ENCODE measurements at regions of chr5 and their contacts with region 1.

Region 1: GRCh38 chr5:149960272-149961185 is at the start of gene SLC26A2:
- DNase-seq: peak; percentile 90 to 95 (median 91)
- H3K4me3 ChIP-seq: peak within 1 kb of the TSS; percentile 82
- H3K4me3 Mint-ChIP-seq: peak within 1 kb of the TSS; percentile 91 to 98 (median 96)
- H3K27ac ChIP-seq: peak within 1 kb of the TSS; percentile 83
- H3K27ac Mint-ChIP-seq: peak within 1 kb of the TSS; percentile 86 to 99 (median 96)
- H3K4me1 ChIP-seq: peaks cover 18% of the 10 kb centered on the region
- H3K4me1 Mint-ChIP-seq: peaks cover 28 to 42% (median 41%) of the 10 kb centered on the region in 3 donors
- H3K27me3 ChIP-seq: no peaks in the 10 kb centered on the region
- H3K27me3 Mint-ChIP-seq: no peaks in the 10 kb centered on the region
- total RNA-seq, gene SLC26A2: 9.7 to 10.2 TPM

Region 2: DNA sequence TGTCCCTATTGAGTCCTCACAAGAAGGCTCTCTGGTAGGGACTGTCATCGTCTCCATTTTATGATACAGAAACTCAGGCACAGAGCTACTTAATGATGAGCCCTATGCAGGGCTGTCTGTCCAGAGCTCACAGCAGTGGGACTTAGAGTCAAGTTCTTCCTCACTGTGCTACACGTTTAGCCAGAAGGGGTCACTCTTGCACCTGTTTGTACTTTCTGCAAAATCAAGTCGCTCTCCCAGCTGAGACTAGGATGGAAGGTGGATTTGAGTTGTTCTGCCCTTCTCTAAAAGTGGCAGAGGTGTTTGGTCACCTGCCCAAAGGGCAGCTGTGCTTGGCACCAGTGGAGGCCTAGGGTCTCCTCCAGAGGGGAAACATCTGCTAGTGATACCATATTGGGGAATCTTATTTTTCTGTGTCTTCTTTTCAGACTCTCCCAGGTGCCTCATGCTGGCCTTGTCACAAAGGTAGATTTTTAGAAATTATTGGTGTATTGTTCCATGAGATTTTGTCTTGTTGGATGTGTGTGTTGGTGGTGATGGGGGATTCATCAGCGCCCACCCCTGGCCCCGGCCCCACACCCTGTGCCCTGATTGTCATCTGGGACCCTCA is 126.2 kb before region 1 on chr5:
- CTCF ChIA-PET with region 1: interaction called, 10 read pairs
- POLR2A ChIA-PET with region 1: no interaction called
- DNase-seq: peak in 4 of 5 donors; percentile 28 to 56 (median 38)
- H3K4me3 ChIP-seq: no peak overlapping the region
- H3K4me3 Mint-ChIP-seq: no peak overlapping the region
- H3K27ac ChIP-seq: no peak overlapping the region
- H3K27ac Mint-ChIP-seq: peak overlapping the region in 1 of 8 donors; percentile 58
- H3K4me1 ChIP-seq: no peaks in the 10 kb centered on the region
- H3K4me1 Mint-ChIP-seq: peaks cover 0 to 1% (median 0%) of the 10 kb centered on the region in 3 donors
- H3K27me3 ChIP-seq: no peaks in the 10 kb centered on the region
- H3K27me3 Mint-ChIP-seq: no peaks in the 10 kb centered on the region

Region 3: DNA sequence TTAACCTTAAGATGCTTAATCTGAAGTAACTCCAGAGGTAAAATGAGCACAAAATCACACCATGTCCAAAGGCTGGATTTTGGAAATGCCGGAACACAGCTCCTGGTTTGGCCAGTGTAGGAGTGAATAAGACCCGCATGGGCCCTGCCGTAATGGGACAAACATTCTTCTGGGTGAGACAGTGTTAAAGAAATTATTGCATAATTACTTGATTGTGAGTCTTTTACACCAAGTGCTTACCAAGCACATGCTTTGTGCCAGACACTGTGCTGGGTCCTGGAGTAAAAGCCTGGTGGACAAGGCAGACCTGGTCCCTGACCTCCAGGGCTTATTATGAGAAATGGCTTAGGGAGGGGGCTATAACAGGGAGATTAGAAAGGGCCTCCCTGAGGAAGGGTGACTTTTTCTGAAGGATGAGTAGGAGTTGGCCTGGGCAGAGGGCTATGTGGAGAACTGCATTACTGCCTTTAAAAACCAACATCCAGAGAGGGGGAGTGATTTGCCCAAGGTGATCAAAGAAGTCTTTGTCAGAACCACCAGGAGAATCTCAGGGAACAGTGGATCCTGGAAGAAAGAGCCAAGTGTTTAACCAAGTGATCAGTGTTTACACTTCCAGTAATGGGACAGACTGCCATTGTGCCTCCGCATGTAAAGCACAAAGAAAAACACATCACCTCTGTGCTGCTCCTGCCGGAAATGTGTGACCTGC is 19.4 kb before region 1 on chr5:
- CTCF ChIA-PET with region 1: no interaction called
- POLR2A ChIA-PET with region 1: no interaction called
- DNase-seq: no peak
- H3K4me3 ChIP-seq: no peak overlapping the region
- H3K4me3 Mint-ChIP-seq: no peak overlapping the region
- H3K27ac ChIP-seq: no peak overlapping the region
- H3K27ac Mint-ChIP-seq: no peak overlapping the region
- H3K4me1 ChIP-seq: no peaks in the 10 kb centered on the region
- H3K4me1 Mint-ChIP-seq: no peaks in the 10 kb centered on the region
- H3K27me3 ChIP-seq: no peaks in the 10 kb centered on the region
- H3K27me3 Mint-ChIP-seq: peaks cover 2 to 12% of the 10 kb centered on the region in 2 donors